OCI-LY7 (cell line): ENCODE measurements at regions of chr2 and their contacts with region 1.

Region 1: DNA sequence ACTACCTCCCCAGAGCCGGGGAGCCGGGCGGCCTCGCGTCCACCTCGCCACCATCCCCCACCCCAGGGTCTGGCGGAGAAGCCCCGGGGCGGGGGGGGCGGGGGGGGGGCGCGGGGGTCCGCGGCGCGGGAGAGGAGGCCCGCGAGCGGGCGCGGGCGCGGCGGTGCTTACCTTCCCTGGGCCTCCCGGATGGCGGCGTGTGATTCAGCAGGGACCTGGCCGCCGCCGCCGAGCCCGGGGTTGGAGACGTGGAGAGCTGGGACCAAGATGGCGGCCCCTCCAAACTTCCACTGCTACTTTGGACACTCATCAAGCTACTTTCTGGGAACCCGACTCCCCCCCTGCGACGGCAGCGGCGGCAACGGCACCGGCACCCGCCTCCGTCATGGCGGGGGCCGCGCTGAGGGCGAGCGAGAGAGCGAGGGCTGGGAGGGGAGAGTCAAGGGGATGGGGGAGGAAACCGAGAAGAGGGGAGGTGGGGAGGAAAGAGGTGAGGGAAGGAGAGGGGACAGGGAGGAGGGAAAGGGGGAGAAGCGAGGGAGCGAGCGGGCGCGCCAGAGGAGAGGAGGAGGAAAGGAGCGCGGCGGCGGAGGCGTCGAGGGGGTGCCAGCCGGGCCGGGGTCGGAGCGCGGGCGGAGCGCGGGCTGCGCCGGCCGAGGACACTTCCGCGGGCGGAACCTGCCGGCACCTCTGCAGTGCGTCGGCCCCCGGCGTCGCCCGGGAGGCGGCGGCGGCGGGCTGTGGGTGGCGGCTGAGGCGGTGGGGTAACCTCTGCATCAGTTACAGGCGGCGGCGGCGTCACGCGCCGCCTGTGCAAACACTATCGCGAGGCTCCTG is at the start of gene TLK1:
- DNase-seq: peak; percentile 90
- H3K4me3 ChIP-seq: peak within 1 kb of the TSS; percentile 94
- H3K27ac ChIP-seq: peak within 1 kb of the TSS; percentile 95
- H3K4me1 ChIP-seq: peaks cover 56% of the 10 kb centered on the region
- CTCF ChIP-seq: 0 out of 2 replicates have a peak, but pooled peaks have one; percentile 1
- total RNA-seq, gene TLK1: 27.2 and 29.7 TPM in 2 replicates

Region 2: GRCh38 chr2:170973492-170974303 is 186.6 kb before region 1 on chr2:
- CTCF ChIA-PET with region 1: no interaction called
- POLR2A ChIA-PET with region 1: interaction called, 3 read pairs
- intact Hi-C with region 1: loop called (anchors 1 kb)
- DNase-seq: peak; percentile 87
- H3K4me3 ChIP-seq: peak overlapping the region; percentile 70
- H3K27ac ChIP-seq: no peak overlapping the region
- H3K4me1 ChIP-seq: peaks cover 16% of the 10 kb centered on the region
- CTCF ChIP-seq: peak; percentile 98

Region 3: GRCh38 chr2:171146633-171147032 is 13.7 kb before region 1 on chr2:
- CTCF ChIA-PET with region 1: no interaction called
- POLR2A ChIA-PET with region 1: interaction called, 26 read pairs
- intact Hi-C with region 1: no loop called
- DNase-seq: peak; percentile 33
- H3K4me3 ChIP-seq: no peak overlapping the region
- H3K27ac ChIP-seq: peak overlapping the region; percentile 20
- H3K4me1 ChIP-seq: peaks cover 36% of the 10 kb centered on the region
- CTCF ChIP-seq: no peak

Region 4: GRCh38 chr2:171319164-171319810 is 158.9 kb after region 1 on chr2:
- CTCF ChIA-PET with region 1: no interaction called
- POLR2A ChIA-PET with region 1: interaction called, 11 read pairs
- intact Hi-C with region 1: loop called (anchors 1 kb)
- DNase-seq: peak; percentile 64
- H3K4me3 ChIP-seq: peak overlapping the region; percentile 42
- H3K27ac ChIP-seq: peak overlapping the region; percentile 100
- H3K4me1 ChIP-seq: peaks cover 100% of the 10 kb centered on the region
- CTCF ChIP-seq: no peak

Region 5: DNA sequence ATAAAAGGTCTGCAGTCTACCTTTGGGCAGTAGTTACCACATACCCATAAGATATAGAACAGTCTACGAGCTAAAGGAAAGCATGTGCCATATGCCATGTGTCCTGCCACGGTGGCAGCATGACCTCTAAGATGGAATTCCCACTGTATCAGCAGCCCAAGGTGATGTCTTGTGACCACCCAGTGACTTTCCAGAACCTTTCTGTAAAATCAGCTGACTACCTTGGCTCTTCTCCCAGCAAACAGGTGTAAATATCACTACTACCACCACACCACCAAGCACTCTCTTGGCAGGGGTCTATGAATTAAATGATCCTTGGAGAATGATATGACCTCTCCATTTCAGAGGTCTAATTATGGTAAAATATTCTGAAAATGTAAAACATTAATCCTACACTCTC is 173.8 kb after region 1 on chr2:
- CTCF ChIA-PET with region 1: no interaction called
- POLR2A ChIA-PET with region 1: interaction called, 4 read pairs
- intact Hi-C with region 1: loop called (anchors 5 kb)
- DNase-seq: no peak
- H3K4me3 ChIP-seq: no peak overlapping the region
- H3K27ac ChIP-seq: peak overlapping the region; percentile 26
- H3K4me1 ChIP-seq: peaks cover 77% of the 10 kb centered on the region
- CTCF ChIP-seq: no peak

Region 6: GRCh38 chr2:171433763-171434670 is 273.7 kb after region 1 on chr2 and contains the starts of genes DCAF17 and METTL8:
- CTCF ChIA-PET with region 1: no interaction called
- POLR2A ChIA-PET with region 1: interaction called, 3 read pairs
- intact Hi-C with region 1: loop called (anchors 1 kb)
- DNase-seq: peak; percentile 99
- H3K4me3 ChIP-seq: peak within 1 kb of the TSS; percentile 88
- H3K27ac ChIP-seq: peak within 1 kb of the TSS; percentile 93
- H3K4me1 ChIP-seq: peaks cover 23% of the 10 kb centered on the region
- CTCF ChIP-seq: peak; percentile 91
- total RNA-seq, gene DCAF17: 24.1 and 25.9 TPM in 2 replicates
- total RNA-seq, gene METTL8: 6.9 and 11.8 TPM in 2 replicates